Caco-2 (cell line): ENCODE measurements at regions of chr5 and their contacts with region 1.

Region 1: DNA sequence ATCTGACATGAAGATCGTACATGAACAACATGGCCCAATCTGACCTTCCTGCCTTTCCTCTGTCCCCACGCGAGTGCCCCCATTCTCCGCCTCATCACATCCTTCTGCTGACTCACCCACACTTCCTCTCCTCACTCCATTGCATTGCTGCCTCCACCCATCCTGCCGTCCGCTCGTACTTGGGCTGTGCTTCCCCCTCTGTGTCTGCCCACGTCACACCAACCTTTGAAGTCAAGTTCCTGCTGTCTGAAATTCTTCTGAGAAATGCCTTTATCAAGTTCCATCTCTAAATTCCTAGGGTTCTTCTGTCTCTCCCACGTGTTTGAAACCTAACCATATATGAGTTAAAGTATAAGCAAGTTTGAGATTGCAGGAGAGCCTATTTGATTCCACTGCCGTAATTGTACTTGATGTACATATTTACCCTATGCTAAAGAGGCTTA is 18.0 kb upstream of the STARD4 start:
- DNase-seq: peak; percentile 89 to 94
- H3K4me3 ChIP-seq: peak overlapping the region; percentile 26
- H3K4me3 Mint-ChIP-seq: peak overlapping the region; percentile 71
- H3K27ac Mint-ChIP-seq: peak overlapping the region; percentile 91
- H3K4me1 ChIP-seq: peaks cover 9% of the 10 kb centered on the region
- H3K4me1 Mint-ChIP-seq: peaks cover 12% of the 10 kb centered on the region
- H3K27me3 ChIP-seq: no peaks in the 10 kb centered on the region
- H3K27me3 Mint-ChIP-seq: no peaks in the 10 kb centered on the region
- CTCF ChIP-seq: no peak

Region 2: DNA sequence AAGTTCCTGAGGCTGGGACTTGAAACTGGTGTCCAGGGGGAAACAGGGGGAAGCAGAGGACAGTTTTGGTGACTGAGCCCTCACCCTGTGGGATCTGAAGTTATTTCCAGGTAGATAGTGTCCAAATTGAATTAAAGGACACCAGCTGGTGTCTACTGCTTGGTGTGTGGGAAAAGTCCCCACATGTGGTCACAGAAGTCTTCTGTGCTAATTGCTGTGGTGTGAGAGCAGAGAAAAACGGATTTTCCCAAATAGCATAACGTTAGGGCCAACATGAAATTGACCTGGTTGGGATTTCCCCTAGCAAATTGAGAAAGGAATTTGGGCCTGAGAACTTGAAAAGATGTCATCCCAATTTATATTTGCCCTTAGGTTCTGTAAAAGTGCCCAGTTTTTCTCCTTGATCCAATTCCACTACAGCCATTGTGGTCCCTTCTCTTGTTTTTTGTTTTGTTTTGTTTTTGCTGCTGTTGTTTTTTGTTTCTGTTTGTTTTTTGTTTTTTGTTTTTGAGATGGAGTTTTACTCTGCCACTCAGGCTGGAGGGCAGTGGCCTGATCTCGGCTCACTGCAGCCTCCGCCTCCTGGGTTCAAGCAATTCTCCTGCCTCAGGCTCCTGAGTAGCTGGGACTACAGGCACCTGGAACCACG is 12.3 kb before region 1 on chr5:
- CTCF ChIA-PET with region 1: no interaction called
- POLR2A ChIA-PET with region 1: interaction called, 8 read pairs
- intact Hi-C with region 1: loop called (anchors 1 kb)
- DNase-seq: no peak
- H3K4me3 ChIP-seq: no peak overlapping the region
- H3K4me3 Mint-ChIP-seq: no peak overlapping the region
- H3K27ac Mint-ChIP-seq: no peak overlapping the region
- H3K4me1 ChIP-seq: peaks cover 31% of the 10 kb centered on the region
- H3K4me1 Mint-ChIP-seq: peaks cover 38% of the 10 kb centered on the region
- H3K27me3 ChIP-seq: no peaks in the 10 kb centered on the region
- H3K27me3 Mint-ChIP-seq: no peaks in the 10 kb centered on the region
- CTCF ChIP-seq: no peak